ENCODE measurements at regions of chr15 and their contacts with region 1.

Region 1: GRCh38 chr15:51281368-51281967 is 56.9 kb downstream of the CYP19A1 start:
- DNase-seq: peak; percentile 22
- ATAC-seq: peak; percentile 99
- H3K4me3 ChIP-seq: no peak overlapping the region
- H3K27ac ChIP-seq: no peak overlapping the region
- H3K4me1 ChIP-seq: no peaks in the 10 kb centered on the region
- H3K27me3 ChIP-seq: peaks cover 5% of the 10 kb centered on the region; the same call in 1 of the 2 replicates
- CTCF ChIP-seq: peak; percentile 50 to 78 (median 72); a peak in 5 of 6 replicates
- POLR2A ChIP-seq: no peak
- RAD21 ChIP-seq: peak; percentile 65

Region 2: GRCh38 chr15:50876989-50877360 is 404.5 kb before region 1 on chr15:
- CTCF ChIA-PET with region 1: no interaction called
- POLR2A ChIA-PET with region 1: no interaction called
- RAD21 ChIA-PET with region 1: no interaction called
- intact Hi-C with region 1: no loop called
- DNase-seq: peak; percentile 68
- ATAC-seq: peak; percentile 81
- H3K4me3 ChIP-seq: peak overlapping the region; percentile 8 to 34; a peak in 3 of 4 replicates
- H3K27ac ChIP-seq: no peak overlapping the region
- H3K4me1 ChIP-seq: peaks cover 0 to 10% of the 10 kb centered on the region in 2 experiments; a peak in 2 of 4 replicates
- H3K27me3 ChIP-seq: peaks cover 6% of the 10 kb centered on the region; the same call in 1 of the 2 replicates
- CTCF ChIP-seq: peak; percentile 73 to 97 (median 94)
- POLR2A ChIP-seq: no peak
- RAD21 ChIP-seq: peak; percentile 94

Region 3: DNA sequence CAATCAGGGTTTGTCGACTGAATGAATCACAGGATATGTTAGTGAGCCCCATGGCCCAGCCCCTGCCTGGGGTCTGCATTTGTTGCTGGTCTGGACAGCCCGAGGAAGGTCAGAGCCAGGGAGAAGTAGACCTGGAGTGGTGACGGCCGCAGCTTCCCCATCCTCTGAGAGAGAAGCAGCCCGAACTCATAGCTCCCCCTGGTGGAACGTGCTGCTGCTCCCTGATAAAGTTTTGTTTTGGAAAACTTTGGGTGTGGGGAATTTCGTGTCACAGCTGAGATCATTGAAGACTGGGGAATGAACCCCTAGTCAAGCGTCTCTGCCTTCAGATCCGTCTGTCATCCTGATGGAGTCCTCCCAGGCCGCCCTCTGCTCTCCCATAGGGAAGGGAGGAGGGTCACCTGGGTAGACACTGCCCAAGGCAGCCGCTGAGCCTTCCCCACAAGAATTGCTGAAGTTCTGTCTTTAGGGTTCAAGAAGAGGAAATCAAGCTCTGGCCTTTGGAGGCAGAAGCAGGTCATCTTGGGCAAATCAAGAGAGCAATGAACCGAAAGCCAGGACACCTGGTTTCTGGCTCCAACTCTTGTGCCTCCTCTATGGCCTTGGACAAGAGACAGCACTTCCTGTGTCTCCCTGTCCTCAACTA is 120.5 kb after region 1 on chr15:
- CTCF ChIA-PET with region 1: interaction called, 9 read pairs
- POLR2A ChIA-PET with region 1: no interaction called
- RAD21 ChIA-PET with region 1: no interaction called
- intact Hi-C with region 1: loop called (anchors 2 kb)
- DNase-seq: no peak
- ATAC-seq: peak; percentile 81
- H3K4me3 ChIP-seq: no peak overlapping the region
- H3K27ac ChIP-seq: no peak overlapping the region
- H3K4me1 ChIP-seq: no peaks in the 10 kb centered on the region
- H3K27me3 ChIP-seq: no peaks in the 10 kb centered on the region
- CTCF ChIP-seq: peak; percentile 40 to 84 (median 82); a peak in 5 of 6 replicates
- POLR2A ChIP-seq: no peak
- RAD21 ChIP-seq: peak; percentile 60

Region 4: DNA sequence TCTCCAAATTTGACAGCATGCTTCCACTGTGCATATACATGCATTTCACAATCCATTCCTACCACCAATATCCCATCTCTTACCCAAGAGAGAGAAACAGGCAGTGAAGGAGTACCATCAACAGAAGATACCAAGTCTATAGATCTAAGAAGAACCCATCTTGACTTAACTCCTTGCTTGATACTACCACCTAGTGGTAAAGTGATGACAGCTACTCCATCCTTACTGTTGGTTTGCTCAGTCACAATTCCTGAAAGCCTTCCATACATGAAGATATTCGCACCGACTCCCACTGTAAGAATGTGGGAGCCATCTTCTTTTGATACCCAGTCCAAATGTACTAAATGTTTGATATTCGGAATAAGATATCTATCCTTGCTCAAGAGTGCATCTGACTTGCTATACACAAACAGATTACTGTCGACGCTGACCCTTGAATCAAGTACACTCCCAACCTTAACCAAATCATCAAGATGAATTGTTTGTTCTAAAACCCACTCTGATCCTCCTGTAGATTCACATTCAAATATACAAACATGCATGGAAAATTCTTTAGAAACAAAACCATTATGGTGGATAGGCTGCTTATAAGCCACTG is 218.0 kb after region 1 on chr15:
- CTCF ChIA-PET with region 1: no interaction called
- POLR2A ChIA-PET with region 1: no interaction called
- RAD21 ChIA-PET with region 1: interaction called in 1 of 2 experiments, 3 read pairs
- intact Hi-C with region 1: loop called (anchors 2 kb)
- DNase-seq: peak; percentile 50
- ATAC-seq: peak; percentile 95
- H3K4me3 ChIP-seq: no peak overlapping the region
- H3K27ac ChIP-seq: no peak overlapping the region
- H3K4me1 ChIP-seq: peaks cover 0 to 7% of the 10 kb centered on the region in 2 experiments; a peak in 2 of 4 replicates
- H3K27me3 ChIP-seq: no peaks in the 10 kb centered on the region
- CTCF ChIP-seq: peak; percentile 40 to 78 (median 73); a peak in 5 of 6 replicates
- POLR2A ChIP-seq: no peak
- RAD21 ChIP-seq: peak; percentile 74

Measured in HCT116 (cell line).